ENCODE measurements at regions of chrX and their contacts with region 1.

Region 1: DNA sequence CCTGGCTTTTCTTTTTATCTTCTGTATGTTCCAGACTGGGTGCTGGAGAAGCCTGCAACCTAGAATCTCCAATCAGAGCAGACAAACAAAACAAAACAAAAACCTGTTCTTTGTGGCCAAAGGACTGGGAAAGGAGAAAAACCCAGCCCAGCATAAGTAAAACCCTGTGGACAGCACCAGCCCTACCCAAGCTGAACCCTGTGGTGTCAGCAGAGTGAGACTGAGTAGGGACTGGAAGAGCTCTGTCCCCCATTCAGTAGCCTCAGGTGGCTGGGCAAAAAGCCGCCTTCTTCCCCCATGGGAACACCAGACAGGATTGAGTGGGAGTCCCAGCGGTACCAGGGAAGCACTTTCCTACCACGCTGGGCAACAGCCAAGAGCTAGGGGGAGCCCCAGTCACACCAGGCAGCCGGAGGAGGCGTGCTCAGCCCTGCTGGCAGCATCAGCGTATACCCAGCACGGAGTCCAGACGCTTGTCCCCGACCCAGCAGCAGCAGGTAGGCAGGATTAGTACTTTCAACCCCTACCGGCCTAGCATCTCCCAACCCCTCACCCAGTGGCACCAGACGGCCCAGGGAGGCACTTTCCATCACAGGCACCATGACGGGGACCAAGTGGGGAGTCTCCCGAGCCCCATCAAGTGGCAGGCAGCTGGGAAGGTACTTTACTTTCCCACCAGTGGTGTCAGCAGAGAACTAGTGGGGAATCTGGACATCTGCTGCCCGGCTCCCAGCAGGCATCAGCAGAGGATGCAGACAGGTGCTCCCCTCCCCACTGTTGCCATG is 8.6 kb upstream of the JADE3 start:
- DNase-seq: peak; percentile 80
- H3K4me3 ChIP-seq: peak overlapping the region; percentile 54
- H3K27ac ChIP-seq: no peak overlapping the region
- H3K4me1 ChIP-seq: peaks cover 10% of the 10 kb centered on the region
- CTCF ChIP-seq: peak; percentile 78

Region 2: DNA sequence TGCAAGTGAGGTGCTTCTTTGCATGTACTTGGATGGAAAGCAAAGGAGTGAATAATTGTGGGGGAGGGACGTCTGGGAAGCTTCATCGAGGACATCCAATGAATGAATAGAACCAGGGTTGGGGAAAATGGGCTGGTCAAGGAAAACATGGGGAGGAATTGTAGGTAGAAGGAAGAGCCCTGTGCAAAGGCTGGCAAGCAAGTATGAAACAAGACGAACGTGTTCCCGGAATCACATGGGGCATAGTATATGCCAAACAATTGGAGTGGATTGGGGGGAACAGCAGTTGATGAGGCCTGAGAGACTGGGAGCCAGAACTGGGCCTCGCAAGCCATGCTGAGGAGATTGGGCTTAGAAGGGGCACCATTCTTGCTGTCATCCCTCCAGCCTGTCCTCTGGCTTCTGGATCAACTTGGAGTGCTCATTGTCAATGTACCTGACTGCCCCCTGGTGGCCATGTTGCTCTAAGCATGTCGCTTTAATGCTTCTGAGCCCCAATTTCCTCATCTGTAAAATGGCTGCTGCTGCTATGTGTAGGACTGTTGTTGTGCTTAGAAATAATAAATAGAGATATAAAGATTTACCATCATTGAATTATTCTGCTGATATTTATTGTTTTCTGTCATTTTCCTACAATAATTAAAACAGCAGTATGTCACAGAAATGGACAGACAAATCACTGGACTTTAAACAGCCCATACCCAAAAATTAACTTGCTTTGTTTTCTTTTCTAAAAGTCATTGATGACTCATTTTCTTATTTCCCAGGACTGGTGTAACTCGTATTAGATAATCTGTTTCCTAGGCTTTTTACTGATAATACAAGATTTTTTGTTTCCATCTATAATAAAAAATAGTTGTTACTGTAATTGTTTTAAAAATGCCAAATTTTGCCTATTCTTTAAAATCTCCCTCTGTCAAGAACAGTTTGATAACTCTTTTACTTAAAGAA is 75.0 kb after region 1 on chrX:
- CTCF ChIA-PET with region 1: no interaction called
- POLR2A ChIA-PET with region 1: no interaction called
- intact Hi-C with region 1: loop called (anchors 1 kb)
- DNase-seq: peak; percentile 81
- H3K4me3 ChIP-seq: no peak overlapping the region
- H3K27ac ChIP-seq: no peak overlapping the region
- H3K4me1 ChIP-seq: no peaks in the 10 kb centered on the region
- CTCF ChIP-seq: peak; percentile 82

Region 3: GRCh38 chrX:47030339-47030738 is 126.7 kb after region 1 on chrX:
- CTCF ChIA-PET with region 1: no interaction called
- POLR2A ChIA-PET with region 1: no interaction called
- intact Hi-C with region 1: loop called (anchors 2 kb)
- DNase-seq: peak; percentile 73
- H3K4me3 ChIP-seq: no peak overlapping the region
- H3K27ac ChIP-seq: no peak overlapping the region
- H3K4me1 ChIP-seq: peaks cover 6% of the 10 kb centered on the region
- CTCF ChIP-seq: peak; percentile 82

Region 4: GRCh38 chrX:47078129-47079043 is 174.7 kb after region 1 on chrX and contains the start of gene RGN:
- CTCF ChIA-PET with region 1: no interaction called
- POLR2A ChIA-PET with region 1: no interaction called
- intact Hi-C with region 1: loop called (anchors 5 kb)
- DNase-seq: no peak
- H3K4me3 ChIP-seq: no peak within 1 kb of the TSS
- H3K27ac ChIP-seq: no peak within 1 kb of the TSS
- H3K4me1 ChIP-seq: no peaks in the 10 kb centered on the region
- CTCF ChIP-seq: no peak
- total RNA-seq, gene RGN: 0.25 TPM in 1 of 2 replicates, not detected in the other

Region 5: DNA sequence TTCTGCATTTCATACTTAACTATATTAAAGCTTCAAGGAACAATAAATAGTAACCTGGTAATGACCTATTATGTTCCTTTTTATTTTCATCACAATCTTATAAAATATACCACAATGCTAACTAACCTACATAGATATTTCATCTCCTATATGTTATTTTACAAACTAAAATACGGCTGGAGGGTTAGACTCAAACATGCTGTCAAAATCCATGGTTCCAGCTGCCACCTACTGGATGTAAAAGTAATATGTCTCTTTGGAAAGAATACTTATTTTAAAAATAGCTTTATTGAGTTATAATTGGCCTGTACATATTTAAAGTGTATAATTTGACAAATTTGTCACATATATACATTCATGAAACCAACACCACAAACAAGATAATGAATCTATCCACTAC is 189.6 kb after region 1 on chrX:
- CTCF ChIA-PET with region 1: no interaction called
- POLR2A ChIA-PET with region 1: no interaction called
- intact Hi-C with region 1: loop called (anchors 10 kb)
- DNase-seq: peak; percentile 52
- H3K4me3 ChIP-seq: no peak overlapping the region
- H3K27ac ChIP-seq: no peak overlapping the region
- H3K4me1 ChIP-seq: no peaks in the 10 kb centered on the region
- CTCF ChIP-seq: peak; percentile 77